Posterior vena cava (tissue), 2 donors: ENCODE measurements at regions of chr19 and their contacts with region 1.

Region 1: GRCh38 chr19:3544742-3545668 is 6.0 kb downstream of the TEKTIP1 start:
- DNase-seq: peak; percentile 92

Region 2: DNA sequence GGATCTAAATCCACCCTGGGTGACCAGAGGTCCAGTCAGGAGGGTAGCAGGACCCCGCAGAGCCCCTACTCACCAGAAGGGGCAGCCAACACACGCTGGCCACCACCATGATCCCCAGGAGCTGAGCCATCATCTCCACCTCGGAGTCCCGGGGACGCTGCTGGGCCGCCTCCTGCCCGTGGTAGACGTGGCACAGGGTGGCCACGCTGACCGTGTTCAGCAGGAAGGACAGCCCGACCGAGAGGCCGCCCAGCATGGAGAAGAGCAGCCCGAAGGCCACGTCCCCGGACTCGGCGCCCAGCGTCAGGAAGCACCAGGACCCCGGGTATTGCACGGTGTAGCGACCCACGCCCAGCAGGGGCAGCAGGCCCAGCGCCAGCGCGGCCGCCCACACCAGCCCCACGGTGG is 54.8 kb after region 1 on chr19:
- intact Hi-C with region 1: loop called in 1 of 2 experiments (anchors 1 kb)
- DNase-seq: peak; percentile 67

Region 3: DNA sequence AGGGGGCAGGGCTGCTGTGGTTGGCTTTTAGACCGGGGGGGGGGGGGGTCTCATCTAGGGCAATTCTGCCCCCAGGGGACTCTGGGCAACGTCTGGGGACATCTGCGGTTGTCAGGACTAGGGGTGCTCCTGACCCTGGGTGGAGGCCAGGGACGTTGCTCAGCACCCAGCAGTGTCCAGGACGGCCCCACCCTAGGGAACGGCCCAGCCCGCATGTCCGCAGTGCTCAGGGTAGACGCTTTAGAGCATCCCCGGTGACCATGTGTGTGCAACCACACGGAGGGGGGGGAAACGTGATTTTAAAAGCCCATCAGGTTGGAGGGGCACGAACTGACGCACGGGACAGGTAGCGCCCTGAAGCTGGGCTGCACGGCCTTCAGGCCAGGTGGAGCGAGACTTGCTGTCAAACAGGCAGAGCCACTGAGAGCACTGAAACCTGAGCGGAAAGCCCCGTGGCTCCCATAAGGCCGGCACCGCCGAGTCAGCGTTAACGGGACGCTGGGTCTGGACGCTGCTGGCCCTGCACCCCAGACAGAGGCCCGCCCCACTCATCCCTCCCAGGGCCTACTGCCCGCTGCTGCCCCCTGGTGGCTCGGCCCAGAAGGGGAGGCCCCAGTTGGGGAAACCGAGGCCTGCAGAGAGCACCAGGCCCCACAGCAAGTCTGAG is 73.3 kb after region 1 on chr19:
- intact Hi-C with region 1: loop called in 1 of 2 experiments (anchors 5 kb)
- DNase-seq: peak; percentile 93

Region 4: DNA sequence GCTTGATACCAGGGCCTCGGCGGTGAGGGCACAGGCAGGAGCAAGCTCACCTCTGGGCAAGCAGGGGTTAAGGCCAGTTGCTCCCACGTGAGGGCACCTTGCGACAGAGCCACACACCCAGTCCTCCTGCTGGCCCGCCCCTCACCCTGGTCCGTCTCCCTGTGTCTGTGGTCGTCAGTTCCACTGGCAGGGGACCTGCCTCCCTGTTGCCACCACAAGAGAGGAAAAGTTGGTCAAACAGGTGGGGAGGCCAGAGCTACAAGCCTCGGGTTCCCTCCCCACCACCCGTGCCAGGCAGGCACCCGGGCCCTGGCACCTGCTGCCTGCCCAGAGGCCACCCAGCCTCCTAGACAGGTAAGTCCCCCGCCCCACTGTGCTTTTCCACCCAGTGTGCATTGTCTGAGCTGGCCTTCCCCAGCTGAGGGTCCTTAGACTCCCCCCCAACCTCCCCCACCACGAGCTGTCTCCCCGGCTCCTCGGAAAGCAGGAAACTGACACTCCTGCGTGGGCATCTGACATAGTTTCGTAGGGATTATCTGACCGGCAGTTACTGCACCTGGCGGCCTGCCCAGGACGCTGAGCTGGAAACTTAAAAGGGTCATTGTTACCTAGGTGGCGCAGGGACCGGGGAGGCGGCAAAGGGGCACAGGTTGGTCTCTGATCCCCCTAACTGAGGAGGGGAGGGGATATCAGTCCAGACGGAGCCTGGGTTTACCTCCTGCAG is 163.4 kb after region 1 on chr19 and contains the start of gene TJP3:
- intact Hi-C with region 1: loop called in 1 of 2 experiments (anchors 5 kb)
- DNase-seq: no peak
- total RNA-seq, gene TJP3: 0.10 TPM in 1 of 2 donors, not detected in the other